MCF 10A (cell line): ENCODE measurements at regions of chr1 and their contacts with region 1.

Region 1: DNA sequence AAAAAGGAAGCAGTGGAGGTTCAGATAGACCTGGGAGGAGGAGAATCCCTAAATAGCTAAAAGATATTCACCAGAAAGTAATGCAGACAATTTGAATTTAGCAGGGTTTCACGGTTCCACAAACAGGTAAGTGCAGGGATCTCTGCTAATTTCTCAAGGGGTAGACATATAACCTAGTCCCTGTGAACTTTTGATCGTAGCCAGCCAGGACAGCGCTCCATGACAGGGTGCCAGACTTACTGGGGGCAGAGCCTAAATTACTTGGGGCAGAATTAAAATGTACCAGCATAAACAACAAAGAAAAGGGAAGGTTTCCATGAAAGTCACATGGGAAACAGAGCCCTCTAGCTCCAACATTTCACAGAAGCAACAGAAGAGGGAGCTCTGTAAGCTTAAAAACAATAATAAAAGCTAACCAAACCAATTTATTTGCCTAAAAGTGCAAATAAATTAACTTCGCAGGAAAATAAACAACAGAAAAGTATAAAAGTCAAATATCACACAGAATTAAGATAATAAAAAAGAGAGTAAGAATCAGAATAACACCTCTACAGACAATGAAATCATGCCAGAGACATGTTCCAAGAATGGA is 198.3 kb downstream of the DUSP10 start:
- DNase-seq: peak; percentile 56
- H3K4me3 Mint-ChIP-seq: no peak overlapping the region
- H3K27ac Mint-ChIP-seq: peak overlapping the region; percentile 44
- H3K4me1 Mint-ChIP-seq: peaks cover 15% of the 10 kb centered on the region
- H3K27me3 Mint-ChIP-seq: no peaks in the 10 kb centered on the region
- CTCF ChIP-seq: peak; percentile 86

Region 2: GRCh38 chr1:221419513-221420088 is 124.0 kb before region 1 on chr1:
- CTCF ChIA-PET with region 1: no interaction called
- POLR2A ChIA-PET with region 1: no interaction called
- intact Hi-C with region 1: no loop called
- DNase-seq: peak; percentile 99
- H3K4me3 Mint-ChIP-seq: no peak overlapping the region
- H3K27ac Mint-ChIP-seq: peak overlapping the region; percentile 87
- H3K4me1 Mint-ChIP-seq: peaks cover 31% of the 10 kb centered on the region
- H3K27me3 Mint-ChIP-seq: no peaks in the 10 kb centered on the region
- CTCF ChIP-seq: no peak

Region 3: DNA sequence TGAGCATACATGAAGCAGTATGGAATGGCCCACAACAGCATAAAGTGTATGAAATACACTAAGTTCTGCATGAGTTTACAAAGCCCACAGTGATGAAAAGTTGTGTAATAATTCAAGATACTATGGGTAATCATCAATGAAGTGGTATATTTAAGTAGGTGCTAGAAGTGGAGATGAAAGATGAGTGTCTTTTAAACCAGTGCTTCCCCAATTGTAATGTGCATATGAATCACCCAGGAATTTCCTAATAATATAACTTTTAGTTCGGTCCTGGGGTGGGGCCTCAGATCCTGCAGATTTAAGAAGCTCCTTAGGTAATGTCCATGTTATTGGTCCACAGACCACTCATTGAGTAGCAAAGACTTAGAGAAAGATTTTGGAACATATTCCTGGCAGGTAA is 13.4 kb after region 1 on chr1:
- CTCF ChIA-PET with region 1: interaction called, 11 read pairs
- POLR2A ChIA-PET with region 1: interaction called, 3 read pairs
- intact Hi-C with region 1: no loop called
- DNase-seq: no peak
- H3K4me3 Mint-ChIP-seq: no peak overlapping the region
- H3K27ac Mint-ChIP-seq: no peak overlapping the region
- H3K4me1 Mint-ChIP-seq: peaks cover 4% of the 10 kb centered on the region
- H3K27me3 Mint-ChIP-seq: no peaks in the 10 kb centered on the region
- CTCF ChIP-seq: no peak